GM13976 (cell line): ENCODE measurements at regions of chr6 and their contacts with region 1.

Region 1: GRCh38 chr6:16332175-16332542 is 93.8 kb downstream of the GMPR start:
- DNase-seq: peak; percentile 84
- CTCF ChIP-seq: peak; percentile 69

Region 2: GRCh38 chr6:16154904-16155303 is 177.3 kb before region 1 on chr6:
- in situ Hi-C with region 1: no loop called
- DNase-seq: no peak
- CTCF ChIP-seq: no peak

Region 3: GRCh38 chr6:16770701-16771569 is 438.8 kb after region 1 on chr6:
- in situ Hi-C with region 1: loop called (anchors 5 kb)
- DNase-seq: peak; percentile 68
- CTCF ChIP-seq: peak; percentile 93

Region 4: GRCh38 chr6:16964553-16965501 is 632.7 kb after region 1 on chr6:
- in situ Hi-C with region 1: loop called (anchors 25 kb)
- DNase-seq: peak; percentile 61
- CTCF ChIP-seq: peak; percentile 85

Region 5: GRCh38 chr6:17086469-17086868 is 754.3 kb after region 1 on chr6:
- in situ Hi-C with region 1: loop called (anchors 25 kb)
- DNase-seq: peak; percentile 43
- CTCF ChIP-seq: peak; percentile 54